ENCODE measurements at regions of chr15 and their contacts with region 1.

Region 1: GRCh38 chr15:51051776-51052175 is 42.9 kb downstream of the TNFAIP8L3 start:
- DNase-seq: no peak
- CTCF ChIP-seq: no peak

Region 2: GRCh38 chr15:51069983-51070382 is 18.2 kb after region 1 on chr15:
- CTCF ChIA-PET with region 1: interaction called, 19 read pairs
- POLR2A ChIA-PET with region 1: no interaction called
- DNase-seq: no peak
- CTCF ChIP-seq: no peak

Measured in GM10248 (cell line).